ENCODE measurements at regions of chr9 and their contacts with region 1.

Region 1: DNA sequence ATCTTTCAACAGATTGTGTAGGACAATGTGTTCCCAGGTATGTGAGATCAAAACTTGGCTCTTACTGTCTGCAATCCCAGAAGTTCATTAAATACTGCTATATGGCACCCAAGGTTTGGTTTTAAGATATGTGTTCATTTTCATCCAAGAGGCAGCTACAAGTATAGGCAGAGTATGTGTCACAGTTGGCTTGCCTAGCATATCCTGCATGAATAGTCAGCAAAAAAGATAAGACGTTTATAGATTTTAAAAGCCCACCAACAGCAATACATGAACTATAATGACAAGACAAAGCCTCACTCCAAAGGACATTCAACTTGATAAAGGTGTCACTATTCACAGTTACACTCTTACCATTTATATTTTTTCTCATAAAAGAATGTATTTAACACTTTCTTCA is 99.1 kb downstream of the BNC2 start:
- DNase-seq: no peak
- ATAC-seq: no peak
- H3K4me3 ChIP-seq: no peak overlapping the region
- H3K4me3 Mint-ChIP-seq: no peak overlapping the region
- H3K27ac ChIP-seq: no peak overlapping the region
- H3K27ac Mint-ChIP-seq: no peak overlapping the region
- H3K4me1 ChIP-seq: no peaks in the 10 kb centered on the region
- H3K4me1 Mint-ChIP-seq: no peaks in the 10 kb centered on the region
- H3K27me3 ChIP-seq: no peaks in the 10 kb centered on the region
- H3K27me3 Mint-ChIP-seq: no peaks in the 10 kb centered on the region

Region 2: GRCh38 chr9:16796304-16796825 is 25.0 kb after region 1 on chr9:
- CTCF ChIA-PET with region 1: no interaction called
- POLR2A ChIA-PET with region 1: no interaction called
- intact Hi-C with region 1: loop called in 1 of 2 experiments (anchors 1 kb)
- DNase-seq: no peak
- ATAC-seq: no peak
- H3K4me3 ChIP-seq: no peak overlapping the region
- H3K4me3 Mint-ChIP-seq: no peak overlapping the region
- H3K27ac ChIP-seq: no peak overlapping the region
- H3K27ac Mint-ChIP-seq: no peak overlapping the region
- H3K4me1 ChIP-seq: no peaks in the 10 kb centered on the region
- H3K4me1 Mint-ChIP-seq: no peaks in the 10 kb centered on the region
- H3K27me3 ChIP-seq: no peaks in the 10 kb centered on the region
- H3K27me3 Mint-ChIP-seq: no peaks in the 10 kb centered on the region

Region 3: DNA sequence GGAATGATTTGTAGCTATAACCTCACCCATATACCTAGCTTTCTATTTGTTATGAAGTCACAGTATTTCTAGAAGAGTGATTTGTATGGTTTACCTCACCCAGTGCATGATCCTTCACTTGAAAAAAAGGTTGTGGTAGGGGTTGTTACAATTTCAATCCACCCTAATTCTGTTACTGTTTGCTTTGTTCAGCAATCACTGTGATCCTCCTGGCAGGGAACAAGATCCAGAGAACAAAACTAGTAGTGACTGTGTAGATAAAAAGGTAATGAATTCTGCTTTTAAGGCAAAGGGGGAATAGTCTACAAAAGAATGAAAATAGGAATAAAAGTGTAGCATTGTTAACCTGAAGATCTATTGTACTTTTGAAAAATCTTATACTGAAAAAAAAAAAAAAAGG is 616.2 kb after region 1 on chr9:
- CTCF ChIA-PET with region 1: no interaction called
- POLR2A ChIA-PET with region 1: no interaction called
- intact Hi-C with region 1: no loop called
- DNase-seq: no peak
- ATAC-seq: no peak
- H3K4me3 ChIP-seq: no peak overlapping the region
- H3K4me3 Mint-ChIP-seq: no peak overlapping the region
- H3K27ac ChIP-seq: no peak overlapping the region
- H3K27ac Mint-ChIP-seq: no peak overlapping the region
- H3K4me1 ChIP-seq: no peaks in the 10 kb centered on the region
- H3K4me1 Mint-ChIP-seq: no peaks in the 10 kb centered on the region
- H3K27me3 ChIP-seq: no peaks in the 10 kb centered on the region
- H3K27me3 Mint-ChIP-seq: no peaks in the 10 kb centered on the region

Region 4: DNA sequence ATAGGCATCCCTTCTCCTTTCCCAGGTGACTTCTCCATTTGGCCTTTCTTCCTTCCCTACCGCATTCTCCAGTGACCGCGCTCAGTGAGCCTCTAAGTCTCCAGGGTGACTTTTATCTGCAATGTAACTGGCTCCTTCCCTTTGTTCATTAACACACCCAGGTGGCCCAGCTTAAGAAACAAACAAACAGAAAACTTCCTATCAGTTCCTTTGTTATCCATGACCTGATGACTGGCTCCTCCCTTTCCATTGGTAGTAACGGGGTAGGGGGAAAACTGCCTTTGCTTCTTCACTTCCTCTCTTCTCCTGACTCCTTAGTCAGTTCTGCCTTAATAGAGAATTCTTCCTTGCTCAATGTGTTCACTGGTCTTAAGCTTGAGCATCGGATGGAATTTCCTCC is 800.5 kb after region 1 on chr9:
- CTCF ChIA-PET with region 1: no interaction called
- POLR2A ChIA-PET with region 1: no interaction called
- intact Hi-C with region 1: no loop called
- DNase-seq: no peak
- ATAC-seq: no peak
- H3K4me3 ChIP-seq: no peak overlapping the region
- H3K4me3 Mint-ChIP-seq: peak overlapping the region in 1 of 10 donors; percentile 17
- H3K27ac ChIP-seq: no peak overlapping the region
- H3K27ac Mint-ChIP-seq: no peak overlapping the region
- H3K4me1 ChIP-seq: no peaks in the 10 kb centered on the region
- H3K4me1 Mint-ChIP-seq: peaks cover 0 to 1% (median 0%) of the 10 kb centered on the region in 7 donors
- H3K27me3 ChIP-seq: no peaks in the 10 kb centered on the region
- H3K27me3 Mint-ChIP-seq: peaks cover 0 to 13% (median 3%) of the 10 kb centered on the region in 5 donors